GM13976 (cell line): ENCODE measurements at regions of chr11 and their contacts with region 1.

Region 1: DNA sequence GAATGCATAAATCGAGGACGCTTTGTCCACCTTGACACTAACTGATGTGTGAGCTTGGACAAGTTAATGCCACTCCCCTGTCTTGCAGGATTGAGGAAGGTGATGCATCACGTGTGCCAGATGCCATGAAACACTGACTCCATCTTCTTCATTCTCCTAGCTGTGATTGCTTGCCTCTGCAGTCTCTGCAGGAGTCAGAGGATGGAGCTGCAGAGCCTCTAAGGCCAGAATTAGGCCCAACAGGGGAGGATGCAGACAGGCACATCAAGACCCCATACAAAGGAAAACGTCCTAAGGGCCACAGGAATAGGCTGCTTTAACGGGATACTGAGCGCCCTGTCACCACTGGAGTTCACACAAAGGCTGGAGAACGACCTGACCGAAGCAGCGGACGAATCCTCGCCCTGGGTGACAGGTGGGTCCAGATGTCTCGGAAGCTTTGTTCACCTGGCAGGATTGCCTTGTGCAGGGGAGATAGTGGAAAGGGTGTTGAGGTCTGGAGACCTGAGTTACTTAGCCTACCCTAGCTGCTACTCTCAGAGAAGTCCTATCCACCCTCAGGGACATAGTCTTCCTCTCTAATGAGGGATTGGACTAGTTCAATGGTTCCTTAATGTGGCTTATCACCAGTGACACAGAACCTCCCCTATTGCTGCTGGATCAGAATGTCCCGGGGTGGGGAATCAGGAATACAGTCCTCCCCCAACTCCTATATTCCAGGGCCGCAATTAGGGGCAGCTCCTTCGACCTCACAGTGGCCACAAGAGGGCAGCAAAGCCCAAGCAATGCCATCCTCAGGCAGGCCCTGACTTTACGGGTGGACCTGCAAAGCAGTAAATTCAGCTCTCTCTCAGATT is 32.4 kb downstream of the DBX1 start:
- DNase-seq: peak; percentile 75
- CTCF ChIP-seq: peak; percentile 82

Region 2: DNA sequence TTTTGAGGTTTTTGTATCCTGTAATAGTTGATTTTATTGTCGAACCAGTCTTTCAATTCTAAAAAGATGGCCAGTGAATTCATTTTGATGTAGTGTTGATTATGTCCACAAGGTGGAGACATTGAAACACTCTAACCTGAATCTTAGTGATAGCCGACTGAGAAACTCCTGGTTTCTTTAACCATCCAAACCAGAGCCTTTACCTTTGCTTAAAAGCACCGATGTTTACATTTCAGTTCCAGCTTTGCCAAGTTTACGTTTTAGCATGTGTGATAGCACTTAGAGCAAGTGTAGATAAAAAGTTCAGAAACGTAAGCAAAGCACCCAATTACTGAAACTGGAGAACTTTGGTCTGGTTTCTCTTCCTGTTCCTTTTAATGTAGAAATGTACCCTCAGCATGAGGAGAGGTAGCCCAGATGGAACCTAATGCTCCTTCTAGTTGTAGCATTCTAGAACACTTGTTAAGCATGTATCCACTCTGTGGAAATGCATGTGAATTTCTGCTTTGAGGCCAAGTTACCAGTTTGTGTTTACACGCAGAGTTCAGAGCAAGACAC is 176.3 kb before region 1 on chr11:
- in situ Hi-C with region 1: loop called (anchors 10 kb)
- DNase-seq: peak; percentile 53
- CTCF ChIP-seq: peak; percentile 23

Region 3: GRCh38 chr11:20342347-20343141 is 214.6 kb after region 1 on chr11:
- in situ Hi-C with region 1: loop called (anchors 10 kb)
- DNase-seq: no peak
- CTCF ChIP-seq: no peak

Region 4: GRCh38 chr11:20451568-20451967 is 323.7 kb after region 1 on chr11:
- in situ Hi-C with region 1: no loop called
- DNase-seq: no peak
- CTCF ChIP-seq: no peak

Region 5: DNA sequence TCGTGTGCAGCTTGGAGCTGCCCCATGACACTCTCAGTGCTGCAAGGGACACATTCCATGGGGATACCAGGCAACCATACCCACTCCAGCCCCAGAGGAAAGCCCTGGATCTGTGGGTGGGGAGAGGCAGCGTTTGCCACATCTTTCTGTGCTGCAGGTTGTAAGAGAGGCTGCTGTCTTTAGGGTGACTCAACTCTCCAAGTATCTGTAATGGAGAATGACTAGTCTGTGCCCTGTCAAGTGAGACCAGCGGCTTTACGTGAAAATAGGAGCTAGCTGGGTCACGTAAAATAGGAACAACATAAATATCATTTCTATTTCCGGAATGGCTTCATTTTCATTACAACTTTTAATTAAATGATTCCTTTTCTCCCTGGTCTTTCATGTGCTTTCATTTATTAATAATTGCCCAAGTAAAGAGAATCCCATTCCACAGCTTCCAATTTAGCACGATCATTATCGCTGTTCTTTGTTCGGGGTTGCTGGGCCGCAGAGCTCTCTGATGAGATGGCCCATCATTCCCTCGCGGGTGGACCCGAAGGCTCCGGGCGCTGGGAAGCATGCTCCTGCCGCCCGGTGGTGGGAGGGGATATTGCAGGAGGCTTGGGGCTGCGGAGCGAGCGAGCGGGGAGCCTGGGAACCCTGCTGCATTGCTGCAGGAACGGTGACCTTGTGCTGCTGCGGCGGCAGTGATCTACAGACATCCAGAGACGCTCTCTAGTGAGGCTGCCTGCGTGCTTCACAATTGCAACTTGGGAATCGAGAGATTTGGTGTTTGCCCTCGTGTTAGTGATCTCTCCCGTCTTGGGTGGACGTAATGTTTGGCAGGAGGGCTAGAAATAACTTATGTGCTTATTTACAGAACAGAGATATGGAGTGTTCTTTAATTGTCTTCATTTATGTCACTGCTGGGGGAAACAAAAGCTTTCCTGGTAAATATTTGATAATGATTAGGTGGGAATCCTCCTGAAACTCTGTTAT is 482.1 kb after region 1 on chr11:
- in situ Hi-C with region 1: loop called (anchors 25 kb)
- DNase-seq: peak; percentile 83
- CTCF ChIP-seq: peak; percentile 96

Region 6: GRCh38 chr11:20658135-20658534 is 530.2 kb after region 1 on chr11:
- in situ Hi-C with region 1: no loop called
- DNase-seq: no peak
- CTCF ChIP-seq: no peak